BJ (cell line): ENCODE measurements at regions of chr12 and their contacts with region 1.

Region 1: DNA sequence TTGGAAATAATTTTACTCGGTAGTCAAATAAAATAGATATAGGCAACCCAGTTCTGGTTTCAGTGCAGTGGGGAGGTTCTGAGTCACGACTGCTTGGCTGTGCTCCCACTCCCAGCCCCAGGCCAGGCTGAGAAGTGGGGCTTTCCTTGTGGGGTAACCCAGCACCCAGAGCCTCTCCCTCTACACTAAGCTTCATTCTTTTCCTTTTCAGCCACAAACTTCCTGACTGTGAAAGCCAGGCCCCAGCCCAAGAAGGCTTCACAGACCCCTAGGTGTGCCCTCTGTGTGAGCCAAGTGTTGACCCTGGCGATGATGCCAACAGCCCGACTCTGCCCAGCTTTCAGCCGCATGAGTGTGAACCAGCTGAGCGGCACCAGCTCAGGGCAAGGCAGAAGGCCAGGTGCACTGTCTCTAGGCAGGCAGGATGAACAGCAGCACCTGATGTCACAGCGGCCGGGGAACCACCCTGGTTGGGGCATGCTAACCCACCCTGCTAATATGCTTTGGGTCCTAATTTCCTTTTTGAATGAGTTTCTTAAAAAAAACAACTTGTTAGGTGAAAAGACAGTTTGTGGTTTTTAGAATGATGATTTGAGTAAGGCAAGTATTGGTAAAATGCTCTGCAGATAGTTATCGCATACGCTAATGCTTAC is 42.2 kb upstream of the ATP23 start:
- DNase-seq: no peak
- H3K4me3 ChIP-seq: no peak overlapping the region
- H3K27me3 ChIP-seq: no peaks in the 10 kb centered on the region
- CTCF ChIP-seq: no peak

Region 2: GRCh38 chr12:57666897-57667296 is 232.2 kb before region 1 on chr12:
- CTCF ChIA-PET with region 1: no interaction called
- POLR2A ChIA-PET with region 1: no interaction called
- DNase-seq: no peak
- H3K4me3 ChIP-seq: no peak overlapping the region
- H3K27me3 ChIP-seq: no peaks in the 10 kb centered on the region
- CTCF ChIP-seq: no peak

Region 3: DNA sequence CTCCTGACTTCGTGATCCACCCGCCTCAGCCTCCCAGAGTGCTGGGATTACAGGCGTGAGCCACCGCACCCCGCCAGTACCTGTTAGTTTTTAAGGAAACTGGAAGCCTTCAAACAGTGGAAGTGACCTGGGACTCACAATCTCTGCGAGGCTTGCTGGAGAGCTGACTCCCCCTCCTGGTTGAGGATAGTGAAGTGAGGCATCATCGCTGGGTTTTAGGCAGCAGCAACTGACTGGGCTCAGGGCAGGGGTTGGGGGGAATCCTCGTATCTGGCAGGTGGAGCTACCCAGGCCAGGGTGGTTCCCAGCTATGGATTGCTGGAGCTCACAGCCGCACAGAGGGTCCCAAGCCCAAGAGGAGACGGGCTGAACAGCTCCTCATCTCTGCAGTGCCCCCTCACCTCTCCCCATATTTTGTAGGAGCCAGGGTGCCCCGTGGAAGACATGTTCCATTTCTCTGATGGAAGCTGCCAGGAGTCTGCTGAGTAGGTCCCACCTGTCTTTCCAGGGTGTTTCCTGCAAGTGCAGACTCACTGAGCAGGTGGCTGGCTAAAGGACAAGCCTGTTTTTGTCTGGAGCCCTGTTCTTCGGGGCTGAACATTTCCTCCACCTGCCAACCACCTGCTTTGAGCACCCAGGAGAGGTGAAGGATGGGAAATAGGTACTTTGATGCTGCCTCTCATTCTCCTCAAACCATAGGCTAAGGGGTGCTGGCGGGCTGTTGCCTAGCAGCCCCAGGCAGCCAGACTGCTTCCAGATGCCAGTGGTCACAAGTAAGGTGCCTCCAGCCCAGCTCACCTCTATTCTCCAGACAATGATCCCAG is 83.7 kb before region 1 on chr12:
- CTCF ChIA-PET with region 1: interaction called, 10 read pairs
- POLR2A ChIA-PET with region 1: interaction called, 8 read pairs
- DNase-seq: no peak
- H3K4me3 ChIP-seq: no peak overlapping the region
- H3K27me3 ChIP-seq: no peaks in the 10 kb centered on the region
- CTCF ChIP-seq: no peak

Region 4: GRCh38 chr12:57836442-57837375 is 62.4 kb before region 1 on chr12:
- CTCF ChIA-PET with region 1: interaction called, 92 read pairs
- POLR2A ChIA-PET with region 1: interaction called, 4 read pairs
- DNase-seq: no peak
- H3K4me3 ChIP-seq: peak overlapping the region; percentile 12
- H3K27me3 ChIP-seq: no peaks in the 10 kb centered on the region
- CTCF ChIP-seq: no peak

Region 5: DNA sequence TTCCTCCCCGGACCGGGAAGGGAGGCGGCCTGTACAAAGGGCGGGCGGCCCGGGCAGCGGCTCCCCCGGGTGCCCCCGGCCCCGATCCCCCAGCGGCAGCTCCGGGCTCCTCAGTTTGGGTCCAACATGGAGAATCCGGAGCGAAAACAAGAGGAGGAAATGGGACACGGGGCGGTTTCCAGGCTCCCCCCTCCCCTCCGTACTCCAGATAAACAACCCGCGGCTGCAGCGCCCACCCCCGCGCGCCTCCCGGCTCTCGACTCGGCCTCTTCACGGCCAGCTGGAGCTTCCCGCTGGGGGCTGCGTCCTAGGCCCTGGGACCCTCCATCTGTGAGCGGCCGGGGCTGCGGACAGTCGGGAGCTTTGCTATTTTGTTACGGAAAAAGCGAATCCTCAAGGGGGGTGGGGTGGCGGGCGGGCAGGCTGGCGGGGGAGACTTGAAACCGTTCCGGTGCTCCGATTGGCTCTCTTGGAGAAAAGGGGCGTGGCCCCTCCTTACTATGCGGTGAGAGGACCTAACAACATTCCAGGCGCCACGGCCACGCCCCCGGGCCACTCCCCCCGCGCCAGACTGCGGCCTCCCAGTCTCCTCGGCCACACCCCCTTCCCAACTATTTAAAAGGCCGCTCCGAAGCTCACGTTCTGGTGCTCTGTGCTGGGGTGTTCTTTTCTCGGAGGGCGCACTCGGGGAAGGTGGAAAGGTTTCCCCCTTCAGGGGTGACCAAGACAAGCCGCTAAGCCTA is 52.4 kb before region 1 on chr12 and contains the start of gene CTDSP2:
- CTCF ChIA-PET with region 1: interaction called, 12 read pairs
- POLR2A ChIA-PET with region 1: interaction called, 13 read pairs
- DNase-seq: peak; percentile 71
- H3K4me3 ChIP-seq: peak within 1 kb of the TSS; percentile 100
- H3K27me3 ChIP-seq: no peaks in the 10 kb centered on the region
- CTCF ChIP-seq: 0 out of 2 replicates have a peak, but pooled peaks have one; percentile 5
- polyA plus RNA-seq, gene CTDSP2: 229 and 284 TPM in 2 replicates

Region 6: DNA sequence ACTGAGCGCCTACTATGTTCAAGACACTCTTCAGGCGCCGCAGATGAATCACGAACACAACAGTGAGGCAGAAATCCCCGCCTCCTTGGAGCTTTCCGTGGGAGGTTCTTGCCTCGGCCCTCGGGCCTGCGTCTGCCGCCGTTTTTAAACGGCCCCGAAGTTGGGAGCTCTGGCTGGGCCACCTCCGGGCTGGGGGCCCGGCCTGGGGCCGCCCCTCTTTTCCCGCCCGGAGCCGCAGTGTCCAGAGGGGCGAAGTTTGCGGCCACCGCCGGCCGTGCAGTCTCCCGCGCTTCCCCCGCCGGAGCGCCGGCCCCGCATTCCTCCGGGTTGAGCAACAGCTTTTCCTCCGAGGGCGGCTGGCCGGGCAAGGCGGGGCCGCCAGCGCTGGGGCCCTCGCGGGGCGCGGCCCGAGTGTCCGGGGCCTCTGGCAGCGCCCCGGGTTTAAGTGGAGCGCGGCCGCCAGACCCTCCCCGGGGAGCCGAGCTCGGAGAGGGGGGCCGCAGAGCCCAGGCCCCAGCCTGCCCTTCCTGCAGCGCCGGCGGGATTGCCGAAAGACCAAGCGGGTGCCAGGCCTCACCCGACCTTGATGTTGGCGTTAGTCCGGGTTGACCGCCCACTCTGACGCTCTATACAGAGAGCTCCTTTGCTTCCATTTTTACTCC is 33.9 kb before region 1 on chr12:
- CTCF ChIA-PET with region 1: interaction called, 35 read pairs
- POLR2A ChIA-PET with region 1: interaction called, 4 read pairs
- DNase-seq: peak; percentile 38
- H3K4me3 ChIP-seq: peak overlapping the region; percentile 46
- H3K27me3 ChIP-seq: no peaks in the 10 kb centered on the region
- CTCF ChIP-seq: no peak